Activated B cell treated with CpG ODN at 0.5 μM for 24 hours (primary cell): ENCODE measurements at regions of chr13 and their contacts with region 1.

Region 1: GRCh38 chr13:36999054-36999714 is at the start of gene ALG5:
- DNase-seq: peak; percentile 96
- ATAC-seq: peak; percentile 72
- H3K4me3 Mint-ChIP-seq: peak within 1 kb of the TSS; percentile 99
- H3K27ac Mint-ChIP-seq: peak within 1 kb of the TSS; percentile 100
- H3K4me1 Mint-ChIP-seq: peaks cover 35% of the 10 kb centered on the region
- H3K27me3 Mint-ChIP-seq: no peaks in the 10 kb centered on the region
- CTCF ChIP-seq: peak; percentile 53
- total RNA-seq, gene ALG5: 24.0 and 25.8 TPM in 2 replicates

Region 2: DNA sequence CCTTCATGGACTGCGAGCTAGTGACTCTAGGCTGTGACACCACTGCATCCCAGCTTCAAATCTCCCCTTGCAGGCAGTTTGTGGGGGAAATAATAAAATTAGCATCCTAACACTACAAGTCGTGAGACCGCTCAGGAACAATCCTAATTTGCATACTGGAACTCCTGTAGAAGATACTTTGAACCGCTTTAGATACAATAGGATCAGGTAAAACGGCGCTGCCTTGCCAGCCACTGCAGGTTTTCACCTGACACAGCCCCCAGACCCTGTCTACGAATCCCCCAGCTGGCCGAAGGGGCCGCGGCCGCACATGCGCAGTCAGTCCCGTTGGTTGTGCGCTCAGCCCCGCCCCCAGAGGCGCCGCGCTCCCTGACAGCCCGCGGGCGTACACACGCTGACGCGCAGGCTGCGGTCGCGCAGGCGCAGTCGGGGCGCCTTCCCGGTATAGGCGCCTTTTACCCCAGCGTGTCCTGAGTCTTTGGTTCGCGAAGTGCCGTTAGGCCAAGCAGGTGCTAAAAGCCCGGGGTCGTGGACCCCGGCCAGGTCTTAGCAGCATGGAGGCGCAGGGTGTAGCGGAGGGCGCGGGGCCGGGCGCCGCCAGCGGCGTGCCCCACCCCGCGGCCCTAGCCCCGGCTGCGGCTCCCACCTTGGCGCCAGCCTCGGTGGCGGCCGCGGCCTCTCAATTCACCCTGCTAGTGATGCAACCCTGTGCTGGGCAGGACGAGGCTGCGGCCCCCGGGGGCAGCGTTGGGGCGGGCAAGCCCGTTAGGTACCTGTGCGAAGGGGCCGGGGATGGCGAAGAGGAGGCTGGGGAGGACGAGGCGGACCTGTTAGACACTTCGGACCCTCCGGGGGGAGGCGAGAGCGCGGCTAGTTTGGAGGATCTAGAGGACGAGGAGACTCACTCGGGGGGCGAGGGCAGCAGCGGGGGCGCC is 180.1 kb before region 1 on chr13 and contains the start of gene RFXAP:
- CTCF ChIA-PET with region 1: no interaction called
- POLR2A ChIA-PET with region 1: interaction called, 6 read pairs
- intact Hi-C with region 1: loop called (anchors 1 kb)
- DNase-seq: peak; percentile 93
- ATAC-seq: peak; percentile 94
- H3K4me3 Mint-ChIP-seq: peak within 1 kb of the TSS; percentile 93
- H3K27ac Mint-ChIP-seq: peak within 1 kb of the TSS; percentile 90
- H3K4me1 Mint-ChIP-seq: peaks cover 44% of the 10 kb centered on the region
- H3K27me3 Mint-ChIP-seq: peaks cover 6% of the 10 kb centered on the region
- CTCF ChIP-seq: no peak
- total RNA-seq, gene RFXAP: 8.8 and 9.6 TPM in 2 replicates

Region 3: GRCh38 chr13:36981156-36981743 is 17.9 kb before region 1 on chr13:
- CTCF ChIA-PET with region 1: no interaction called
- POLR2A ChIA-PET with region 1: interaction called, 11 read pairs
- intact Hi-C with region 1: no loop called
- DNase-seq: no peak
- ATAC-seq: peak; percentile 34
- H3K4me3 Mint-ChIP-seq: no peak overlapping the region
- H3K27ac Mint-ChIP-seq: no peak overlapping the region
- H3K4me1 Mint-ChIP-seq: no peaks in the 10 kb centered on the region
- H3K27me3 Mint-ChIP-seq: no peaks in the 10 kb centered on the region
- CTCF ChIP-seq: no peak

Region 4: DNA sequence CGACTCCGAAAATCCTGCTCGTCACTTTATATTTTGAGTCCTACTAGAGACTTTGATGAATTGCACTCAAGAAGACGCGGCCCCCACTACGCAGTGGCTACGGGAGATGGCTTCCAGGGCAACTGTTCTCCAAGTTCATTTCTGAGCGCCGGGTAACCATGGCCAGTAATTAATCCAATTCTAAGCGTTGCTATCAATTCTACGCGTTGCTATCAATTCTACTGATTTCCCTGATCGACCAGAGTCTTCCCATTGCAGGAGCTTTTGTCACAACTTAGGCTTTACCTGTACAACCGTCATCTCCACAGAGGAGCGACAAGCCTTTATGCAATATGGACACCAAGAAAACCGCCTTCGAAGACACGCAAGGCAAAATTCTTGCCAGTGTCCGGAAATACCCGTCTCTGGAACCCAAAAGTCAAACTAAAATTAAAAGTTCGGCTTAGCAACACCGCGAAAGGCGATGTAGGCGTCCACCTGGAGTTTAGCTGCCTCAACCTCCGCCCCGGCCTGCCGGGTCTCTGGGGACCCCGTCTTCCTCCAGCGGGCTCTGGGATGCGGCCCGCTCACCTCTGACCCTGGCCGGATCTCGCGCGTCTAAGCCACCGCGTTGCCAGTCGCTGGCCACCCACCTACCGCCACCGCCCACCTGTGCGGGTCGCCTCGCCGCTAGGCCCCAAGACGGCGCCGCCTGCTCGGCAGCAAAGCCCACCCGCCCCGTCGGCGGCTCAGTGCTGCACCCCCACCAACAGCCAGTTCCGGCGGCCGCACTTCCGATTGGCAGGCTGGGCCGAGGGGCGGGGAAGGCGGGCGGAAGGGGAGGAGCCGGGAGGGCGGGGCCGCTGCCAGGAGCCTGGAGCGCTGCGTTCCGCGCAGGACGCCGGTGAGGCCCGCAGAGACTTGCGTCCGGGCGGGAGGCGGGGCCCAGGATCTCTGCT is 60.0 kb after region 1 on chr13 and contains the start of gene SUPT20H:
- CTCF ChIA-PET with region 1: no interaction called
- POLR2A ChIA-PET with region 1: interaction called, 25 read pairs
- intact Hi-C with region 1: loop called (anchors 1 kb)
- DNase-seq: peak; percentile 92
- ATAC-seq: peak; percentile 94
- H3K4me3 Mint-ChIP-seq: peak within 1 kb of the TSS; percentile 96
- H3K27ac Mint-ChIP-seq: peak within 1 kb of the TSS; percentile 97
- H3K4me1 Mint-ChIP-seq: peaks cover 29% of the 10 kb centered on the region
- H3K27me3 Mint-ChIP-seq: no peaks in the 10 kb centered on the region
- CTCF ChIP-seq: no peak
- total RNA-seq, gene SUPT20H: 61.9 and 66.6 TPM in 2 replicates